Lower lobe of right lung (tissue), 2 donors: ENCODE measurements at regions of chr1 and their contacts with region 1.

Region 1: DNA sequence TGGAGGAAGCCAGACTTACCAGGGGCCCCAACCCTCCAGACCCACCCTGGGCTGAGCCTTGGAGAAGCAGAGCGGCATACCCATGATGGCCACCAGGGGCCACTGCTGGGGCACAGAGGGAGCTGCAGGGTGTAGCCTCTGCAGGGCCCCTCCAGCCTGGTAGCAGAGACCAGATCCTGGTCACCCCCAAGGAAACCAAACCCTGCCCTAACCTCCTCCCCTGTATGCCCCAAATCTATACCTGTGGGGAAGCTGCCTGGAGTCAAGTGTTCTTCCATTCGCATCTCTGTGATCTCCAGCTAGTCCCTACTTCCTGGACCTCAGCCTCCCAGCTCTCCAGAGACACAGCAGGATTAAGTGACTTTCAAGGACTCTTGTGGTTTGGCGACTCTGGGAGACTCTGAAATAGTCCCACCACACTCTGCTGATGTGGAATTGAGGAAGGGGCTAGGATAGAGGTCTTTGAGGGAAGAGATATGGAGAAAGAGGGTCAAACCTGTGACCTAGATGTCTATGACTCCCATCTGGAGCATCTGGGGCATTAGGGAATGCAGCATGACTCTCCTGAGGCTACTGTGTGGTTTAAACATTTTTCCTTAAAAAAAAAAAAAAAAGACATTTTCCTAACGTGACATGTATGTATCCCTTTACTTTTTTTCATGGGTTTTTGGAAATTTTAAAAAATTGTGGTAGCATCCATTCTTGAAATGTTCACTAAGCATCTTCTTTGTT is 119.2 kb upstream of the IPO9 start:
- DNase-seq: peak; percentile 78
- ATAC-seq: peak; percentile 79 to 81
- H3K4me3 ChIP-seq: no peak overlapping the region
- H3K27ac ChIP-seq: no peak overlapping the region
- H3K4me1 ChIP-seq: peaks cover 54% of the 10 kb centered on the region
- H3K27me3 ChIP-seq: no peaks in the 10 kb centered on the region
- CTCF ChIP-seq: peak; percentile 93

Region 2: DNA sequence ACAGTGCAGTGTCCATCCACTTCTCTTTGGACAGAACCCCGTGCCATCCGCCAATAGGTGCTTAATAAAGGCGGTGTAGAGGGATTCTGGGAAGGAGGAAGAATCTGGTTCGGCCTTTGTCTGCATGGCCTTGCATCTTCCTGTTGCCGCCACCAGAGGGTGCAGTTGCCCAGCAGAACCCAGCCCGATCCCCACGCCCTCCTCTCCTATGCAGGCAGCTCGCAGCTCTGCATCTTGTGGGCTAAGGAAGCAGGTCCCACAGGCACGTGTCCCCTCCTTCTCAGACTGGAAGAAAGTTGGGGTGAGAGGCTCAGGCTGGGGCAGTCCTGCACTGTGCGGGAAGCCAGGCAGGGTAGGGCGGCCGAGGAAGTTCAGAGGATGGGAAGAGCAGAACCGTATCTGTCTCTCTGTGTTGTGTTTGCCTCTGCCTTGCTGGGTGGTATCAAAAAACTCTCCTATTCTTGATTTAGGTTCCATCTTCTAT is 150.0 kb before region 1 on chr1:
- intact Hi-C with region 1: loop called (anchors 10 kb)
- DNase-seq: peak; percentile 85
- ATAC-seq: peak; percentile 94
- H3K4me3 ChIP-seq: no peak overlapping the region
- H3K27ac ChIP-seq: no peak overlapping the region
- H3K4me1 ChIP-seq: peaks cover 59% of the 10 kb centered on the region
- H3K27me3 ChIP-seq: no peaks in the 10 kb centered on the region
- CTCF ChIP-seq: peak; percentile 93

Region 3: GRCh38 chr1:201792534-201793305 is 83.0 kb after region 1 on chr1:
- intact Hi-C with region 1: loop called (anchors 5 kb)
- DNase-seq: peak; percentile 60
- ATAC-seq: peak; percentile 92 to 94
- H3K4me3 ChIP-seq: no peak overlapping the region
- H3K27ac ChIP-seq: peak overlapping the region; percentile 19
- H3K4me1 ChIP-seq: peaks cover 34% of the 10 kb centered on the region
- H3K27me3 ChIP-seq: no peaks in the 10 kb centered on the region
- CTCF ChIP-seq: peak; percentile 93